ENCODE measurements at regions of chr14 and their contacts with region 1.

Region 1: DNA sequence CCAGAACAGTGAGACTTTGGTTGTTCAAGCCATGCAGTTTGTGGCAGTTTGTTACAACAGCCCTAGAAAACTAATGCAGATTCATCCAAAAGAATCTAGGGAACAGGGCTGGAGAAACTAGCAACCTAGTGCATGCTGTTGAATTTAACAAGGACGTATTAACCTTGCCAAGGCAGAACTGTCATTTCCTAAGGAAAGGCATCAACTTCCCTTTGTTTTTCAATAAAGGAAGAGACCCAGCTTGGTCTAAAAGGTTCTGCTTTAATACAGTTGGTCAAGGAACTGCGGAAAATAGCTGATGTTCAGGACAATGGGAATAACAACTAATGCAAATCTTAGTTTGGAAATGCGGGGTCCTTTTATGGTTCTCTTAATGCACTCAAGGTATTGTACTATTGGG is 11.5 kb downstream of the AK7 start:
- DNase-seq: no peak
- ATAC-seq: no peak
- H3K4me3 ChIP-seq: no peak overlapping the region
- H3K27ac ChIP-seq: no peak overlapping the region
- H3K4me1 ChIP-seq: no peaks in the 10 kb centered on the region
- H3K27me3 ChIP-seq: no peaks in the 10 kb centered on the region
- CTCF ChIP-seq: no peak

Region 2: GRCh38 chr14:96464136-96464535 is 60.7 kb after region 1 on chr14:
- CTCF ChIA-PET with region 1: no interaction called
- POLR2A ChIA-PET with region 1: interaction called, 17 read pairs
- in situ Hi-C with region 1: no loop called
- intact Hi-C with region 1: no loop called
- DNase-seq: no peak
- ATAC-seq: no peak
- H3K4me3 ChIP-seq: no peak overlapping the region
- H3K27ac ChIP-seq: no peak overlapping the region
- H3K4me1 ChIP-seq: no peaks in the 10 kb centered on the region
- H3K27me3 ChIP-seq: no peaks in the 10 kb centered on the region
- CTCF ChIP-seq: no peak